Tibial artery (tissue), 4 donors: ENCODE measurements at regions of chr12 and their contacts with region 1.

Region 1: DNA sequence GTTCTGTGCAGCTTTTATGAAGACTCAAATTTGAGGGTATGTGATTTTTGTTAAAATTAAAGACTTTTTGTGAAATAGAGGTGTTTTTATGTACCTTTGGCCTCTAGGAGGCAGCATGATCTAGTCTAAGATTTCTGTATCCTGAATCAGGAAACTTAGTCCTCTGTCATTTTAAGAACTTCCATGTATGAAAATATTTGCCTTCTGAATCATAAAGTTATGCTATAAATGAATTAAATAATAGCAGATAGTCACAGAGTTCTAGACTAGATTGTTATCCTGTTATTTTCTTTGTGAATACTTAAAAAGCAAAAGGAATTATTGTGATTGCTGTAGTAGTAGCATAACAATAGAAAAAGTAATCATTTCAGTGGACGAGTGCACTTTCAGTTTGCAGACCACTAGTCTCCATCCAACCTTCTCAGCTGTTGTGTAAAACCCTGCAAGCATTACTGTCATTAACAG is 56.3 kb downstream of the FGD4 start:
- DNase-seq: no peak
- H3K4me3 ChIP-seq: peak overlapping the region; percentile 15 to 30
- H3K27ac ChIP-seq: peak overlapping the region; percentile 15 to 40
- H3K4me1 ChIP-seq: peaks cover 0 to 44% (median 19%) of the 10 kb centered on the region in 4 donors
- H3K27me3 ChIP-seq: no peaks in the 10 kb centered on the region
- CTCF ChIP-seq: peak; percentile 53 to 80

Region 2: DNA sequence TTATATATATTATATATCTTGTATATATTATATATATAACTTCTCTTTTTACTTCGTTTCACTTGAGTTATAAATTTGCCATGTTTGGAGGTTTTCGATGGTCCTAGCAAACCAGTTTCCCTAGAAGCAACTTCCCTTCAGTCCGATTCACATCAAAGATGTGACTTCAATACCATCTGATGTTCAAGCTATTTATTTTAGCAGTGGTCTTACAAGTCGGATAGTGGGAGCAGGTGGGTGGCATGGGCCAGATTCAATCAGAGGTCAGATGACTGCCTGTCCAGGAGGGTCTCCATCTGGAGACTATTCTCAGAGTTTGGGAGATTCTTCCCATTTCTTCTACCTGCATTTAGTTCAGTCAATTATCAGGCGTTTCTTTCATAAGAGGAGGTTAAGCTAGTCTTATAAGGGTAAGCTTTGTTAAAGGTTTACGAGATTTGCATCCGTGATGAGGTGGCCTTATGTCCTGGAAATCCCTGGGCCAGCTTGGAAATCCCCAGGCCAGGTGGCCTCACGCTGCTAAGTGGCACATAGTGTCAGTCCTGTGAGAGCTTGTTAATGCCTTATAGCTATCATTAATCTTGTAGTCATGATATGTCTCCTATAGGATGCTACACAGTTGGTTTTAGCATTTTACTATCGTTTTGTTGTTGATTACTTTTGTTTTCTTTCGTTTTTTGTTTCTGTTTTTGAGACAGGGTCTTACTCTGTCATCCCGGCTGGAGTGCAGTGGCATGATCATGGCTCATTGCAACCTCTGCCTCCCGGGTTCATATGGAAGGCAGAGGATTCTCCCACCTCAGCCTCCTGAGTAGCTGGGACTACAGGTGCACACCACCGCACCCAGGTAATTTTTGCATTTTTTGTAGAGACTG is 203.2 kb before region 1 on chr12:
- intact Hi-C with region 1: no loop called
- DNase-seq: no peak
- H3K4me3 ChIP-seq: no peak overlapping the region
- H3K27ac ChIP-seq: no peak overlapping the region
- H3K4me1 ChIP-seq: peaks cover 0 to 6% (median 0%) of the 10 kb centered on the region in 4 donors
- H3K27me3 ChIP-seq: no peaks in the 10 kb centered on the region
- CTCF ChIP-seq: no peak

Region 3: GRCh38 chr12:32533971-32534590 is 78.4 kb after region 1 on chr12:
- intact Hi-C with region 1: loop called (anchors 10 kb)
- DNase-seq: peak; percentile 78 to 79
- H3K4me3 ChIP-seq: peak overlapping the region; percentile 52 to 53
- H3K27ac ChIP-seq: peak overlapping the region; percentile 67 to 77
- H3K4me1 ChIP-seq: peaks cover 0 to 57% (median 29%) of the 10 kb centered on the region in 4 donors
- H3K27me3 ChIP-seq: no peaks in the 10 kb centered on the region
- CTCF ChIP-seq: no peak

Region 4: DNA sequence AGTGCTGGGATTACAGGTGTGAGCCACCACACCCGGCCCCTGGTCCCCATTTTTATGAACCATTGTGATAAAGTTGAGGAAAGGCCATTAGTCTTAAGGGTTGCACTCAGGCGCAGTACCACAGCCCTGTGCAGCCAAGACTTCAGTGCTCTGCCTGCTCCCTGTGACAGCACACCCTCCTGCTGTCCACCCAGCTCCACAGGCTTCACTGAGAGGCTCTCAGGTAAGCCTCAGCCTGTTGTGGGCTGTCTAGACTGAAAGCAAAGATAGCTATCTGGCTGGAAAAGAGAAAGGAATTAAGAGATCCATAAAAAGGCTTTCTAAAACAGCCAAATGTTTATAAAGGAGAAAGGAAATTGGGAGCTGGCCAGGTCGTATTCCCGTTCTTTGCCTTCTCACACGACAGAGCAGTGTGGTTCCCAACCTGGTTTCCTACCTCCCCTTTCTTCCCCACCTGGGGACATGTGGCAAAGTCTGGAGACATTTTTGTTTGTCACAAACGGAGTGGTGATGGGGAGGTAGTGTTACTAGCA is 204.3 kb after region 1 on chr12:
- intact Hi-C with region 1: loop called (anchors 5 kb)
- DNase-seq: no peak
- H3K4me3 ChIP-seq: no peak overlapping the region
- H3K27ac ChIP-seq: peak overlapping the region in 1 of 2 donors; percentile 28
- H3K4me1 ChIP-seq: peaks cover 0 to 19% (median 4%) of the 10 kb centered on the region in 4 donors
- H3K27me3 ChIP-seq: no peaks in the 10 kb centered on the region
- CTCF ChIP-seq: no peak